A549 (cell line): ENCODE measurements at regions of chr6 and their contacts with region 1.

Region 1: DNA sequence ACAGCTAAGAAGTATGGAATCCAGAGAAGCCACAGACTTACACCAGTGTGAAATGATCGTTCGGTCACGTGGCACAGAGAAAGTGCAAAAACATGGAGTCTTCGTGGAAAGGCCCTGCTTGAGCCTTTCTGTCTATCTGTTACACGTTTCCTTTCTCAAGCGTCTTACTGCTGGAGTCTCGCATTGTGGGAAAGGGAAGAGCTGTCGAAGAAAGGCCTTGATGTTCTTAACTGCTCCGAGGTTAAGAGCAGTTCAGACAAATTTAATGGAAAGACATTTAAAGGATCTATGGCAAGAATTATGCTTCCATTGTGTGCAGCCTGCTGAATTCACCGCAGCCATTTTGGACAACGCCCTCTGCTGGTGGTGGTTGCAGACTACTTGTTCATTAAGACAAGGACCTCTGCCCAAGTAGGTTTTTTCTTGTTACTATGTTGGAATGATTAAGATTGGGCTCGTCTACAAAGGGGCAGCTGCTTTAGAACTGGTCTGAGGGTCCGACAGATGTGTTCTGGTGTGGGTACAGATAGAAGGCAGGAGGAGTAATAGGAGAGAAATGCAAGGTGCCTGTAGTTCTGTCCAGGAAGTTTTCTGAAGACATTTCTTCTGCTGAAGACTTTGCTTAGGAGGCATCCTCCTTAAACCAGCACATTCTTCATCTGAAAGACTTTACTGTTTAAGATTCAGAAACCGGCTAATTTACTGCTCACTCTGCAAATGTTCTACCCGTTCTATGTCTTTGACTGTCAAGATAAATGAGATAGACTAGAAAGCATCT is 24.7 kb upstream of the CCN6 start:
- DNase-seq: peak; percentile 22 to 68
- ATAC-seq: peak in 1 of 2 experiments; percentile 88; a peak in 3 of 6 replicates
- H3K4me3 ChIP-seq: no peak overlapping the region
- H3K27ac ChIP-seq: no peak overlapping the region
- H3K4me1 ChIP-seq: no peaks in the 10 kb centered on the region
- CTCF ChIP-seq: peak; percentile 57
- EP300 ChIP-seq: no peak
- POLR2A ChIP-seq: no peak
- RAD21 ChIP-seq: no peak; a peak in 1 of 5 replicates

Region 2: GRCh38 chr6:112018619-112019416 is 10.4 kb before region 1 on chr6:
- CTCF ChIA-PET with region 1: interaction called, 12 read pairs
- POLR2A ChIA-PET with region 1: no interaction called
- DNase-seq: no peak
- ATAC-seq: no peak
- H3K4me3 ChIP-seq: no peak overlapping the region
- H3K27ac ChIP-seq: no peak overlapping the region
- H3K4me1 ChIP-seq: no peaks in the 10 kb centered on the region
- CTCF ChIP-seq: no peak
- EP300 ChIP-seq: no peak
- POLR2A ChIP-seq: no peak
- RAD21 ChIP-seq: no peak

Region 3: GRCh38 chr6:112043032-112044007 is 14.1 kb after region 1 on chr6:
- CTCF ChIA-PET with region 1: interaction called, 10 read pairs
- POLR2A ChIA-PET with region 1: no interaction called
- DNase-seq: peak; percentile 68 to 86
- ATAC-seq: peak; percentile 98 to 99
- H3K4me3 ChIP-seq: peak overlapping the region; percentile 70
- H3K27ac ChIP-seq: peak overlapping the region; percentile 80 to 85
- H3K4me1 ChIP-seq: peaks cover under 1% of the 10 kb centered on the region; the same call in 1 of the 3 replicates
- CTCF ChIP-seq: peak; percentile 71
- EP300 ChIP-seq: no peak
- POLR2A ChIP-seq: 0 out of 2 replicates have a peak, but pooled peaks have one; percentile 19
- RAD21 ChIP-seq: peak; percentile 83 to 87

Region 4: GRCh38 chr6:112061605-112062004 is 32.4 kb after region 1 on chr6:
- CTCF ChIA-PET with region 1: no interaction called
- POLR2A ChIA-PET with region 1: no interaction called
- DNase-seq: no peak
- ATAC-seq: no peak
- H3K4me3 ChIP-seq: no peak overlapping the region
- H3K27ac ChIP-seq: no peak overlapping the region
- H3K4me1 ChIP-seq: no peaks in the 10 kb centered on the region
- CTCF ChIP-seq: no peak
- EP300 ChIP-seq: no peak
- POLR2A ChIP-seq: no peak
- RAD21 ChIP-seq: no peak

Region 5: GRCh38 chr6:112821476-112821875 is 792.2 kb after region 1 on chr6:
- CTCF ChIA-PET with region 1: no interaction called
- POLR2A ChIA-PET with region 1: no interaction called
- DNase-seq: no peak
- ATAC-seq: no peak
- H3K4me3 ChIP-seq: no peak overlapping the region
- H3K27ac ChIP-seq: no peak overlapping the region
- H3K4me1 ChIP-seq: no peaks in the 10 kb centered on the region
- CTCF ChIP-seq: no peak
- EP300 ChIP-seq: no peak
- POLR2A ChIP-seq: no peak
- RAD21 ChIP-seq: no peak